Stomach (tissue), 19 donors: ENCODE measurements at regions of chr2 and their contacts with region 1.

Region 1: GRCh38 chr2:30711646-30712085 is 95.6 kb downstream of the CAPN13 start:
- DNase-seq: peak; percentile 88 to 93
- H3K4me3 ChIP-seq: no peak overlapping the region
- H3K27ac ChIP-seq: no peak overlapping the region
- H3K4me1 ChIP-seq: peaks cover 0 to 6% (median 3%) of the 10 kb centered on the region in 4 donors
- H3K27me3 ChIP-seq: no peaks in the 10 kb centered on the region
- CTCF ChIP-seq: peak in 5 of 7 experiments; percentile 92 to 100 (median 98)
- EP300 ChIP-seq: no peak
- POLR2A ChIP-seq: no peak

Region 2: DNA sequence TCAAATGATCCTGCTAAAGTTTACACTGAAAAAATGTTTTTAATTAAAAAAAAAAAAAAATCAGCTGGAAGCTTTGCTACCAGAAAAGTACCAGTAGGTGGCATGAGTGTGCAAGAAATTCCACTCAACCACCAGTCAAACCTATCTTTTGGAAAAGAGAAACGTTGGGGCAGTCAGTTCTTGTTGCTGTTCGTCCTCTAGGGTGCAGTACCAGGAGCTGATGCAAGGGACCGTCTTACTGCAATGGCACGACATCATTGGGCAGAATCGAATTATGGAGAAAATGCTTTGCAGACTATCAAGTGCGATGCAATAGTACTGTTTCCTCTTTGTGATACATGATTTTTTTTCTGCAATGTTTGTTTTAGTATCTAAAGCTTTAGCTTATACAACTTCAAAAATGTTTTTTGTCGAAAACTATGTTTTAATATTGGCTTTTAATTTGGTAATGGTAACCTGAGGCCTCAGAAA is 546.6 kb before region 1 on chr2:
- intact Hi-C with region 1: loop called (anchors 5 kb)
- DNase-seq: peak; percentile 39 to 93
- H3K4me3 ChIP-seq: no peak overlapping the region
- H3K27ac ChIP-seq: no peak overlapping the region
- H3K4me1 ChIP-seq: peaks cover 0 to 41% (median 20%) of the 10 kb centered on the region in 4 donors
- H3K27me3 ChIP-seq: no peaks in the 10 kb centered on the region
- CTCF ChIP-seq: peak in 5 of 7 experiments; percentile 76 to 88 (median 84)
- EP300 ChIP-seq: no peak
- POLR2A ChIP-seq: no peak

Region 3: GRCh38 chr2:30213326-30213725 is 498.3 kb before region 1 on chr2:
- intact Hi-C with region 1: loop called (anchors 5 kb)
- DNase-seq: peak in 1 of 2 donors; percentile 17
- H3K4me3 ChIP-seq: no peak overlapping the region
- H3K27ac ChIP-seq: no peak overlapping the region
- H3K4me1 ChIP-seq: peaks cover 6 to 19% (median 12%) of the 10 kb centered on the region in 4 donors
- H3K27me3 ChIP-seq: no peaks in the 10 kb centered on the region
- CTCF ChIP-seq: no peak
- EP300 ChIP-seq: no peak
- POLR2A ChIP-seq: no peak

Region 4: DNA sequence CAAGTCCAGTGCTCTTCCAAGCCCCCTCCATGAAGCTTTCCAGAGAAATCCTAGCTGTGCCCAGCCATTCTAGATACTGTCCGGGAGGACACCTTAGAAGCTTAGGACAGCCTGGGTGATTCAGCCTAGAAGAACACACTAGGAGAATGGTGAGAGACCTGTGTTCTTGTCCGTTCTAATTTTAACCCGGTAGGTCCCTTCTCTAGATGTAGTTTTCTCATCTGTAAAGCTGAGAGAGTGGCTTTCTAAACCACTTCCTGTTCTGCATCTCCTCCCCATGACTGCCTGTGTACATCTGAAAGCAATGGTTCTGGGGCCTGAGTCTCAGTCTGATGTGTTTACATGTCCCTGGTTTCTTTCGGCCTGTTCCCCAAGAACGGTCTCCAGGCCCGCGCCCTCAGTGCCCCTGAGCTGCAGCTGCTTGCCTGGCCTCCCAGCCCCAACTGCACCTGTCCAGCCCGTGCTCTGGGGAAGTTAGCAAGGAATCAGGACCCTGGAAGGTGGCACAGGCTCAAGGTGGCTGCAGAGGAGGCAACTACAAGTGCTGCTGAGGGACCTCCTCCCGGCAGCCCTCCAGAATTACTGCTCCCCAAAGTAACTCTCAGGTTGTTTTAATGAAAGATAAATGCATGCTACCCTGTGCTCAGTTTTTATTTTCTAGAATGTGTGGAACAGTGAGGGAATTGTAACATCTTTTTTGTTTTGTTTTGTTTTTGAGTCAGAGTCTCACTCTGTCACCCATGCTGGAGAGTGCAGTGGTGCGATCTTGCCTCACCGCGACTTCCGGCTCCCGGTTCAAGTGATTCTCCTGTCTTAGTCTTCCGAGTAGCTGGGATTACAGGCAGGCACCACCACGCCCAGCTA is 374.5 kb before region 1 on chr2:
- intact Hi-C with region 1: loop called (anchors 10 kb)
- DNase-seq: peak in 1 of 2 donors; percentile 56
- H3K4me3 ChIP-seq: no peak overlapping the region
- H3K27ac ChIP-seq: peak overlapping the region in 2 of 5 donors; percentile 49 to 55
- H3K4me1 ChIP-seq: peaks cover 0 to 24% (median 21%) of the 10 kb centered on the region in 4 donors
- H3K27me3 ChIP-seq: no peaks in the 10 kb centered on the region
- CTCF ChIP-seq: no peak
- EP300 ChIP-seq: no peak
- POLR2A ChIP-seq: no peak

Region 5: GRCh38 chr2:31170071-31170698 is 458.5 kb after region 1 on chr2:
- intact Hi-C with region 1: loop called (anchors 5 kb)
- DNase-seq: peak; percentile 53 to 84
- H3K4me3 ChIP-seq: no peak overlapping the region
- H3K27ac ChIP-seq: no peak overlapping the region
- H3K4me1 ChIP-seq: no peaks in the 10 kb centered on the region
- H3K27me3 ChIP-seq: no peaks in the 10 kb centered on the region
- CTCF ChIP-seq: peak in 5 of 7 experiments; percentile 82 to 90 (median 88)
- EP300 ChIP-seq: no peak
- POLR2A ChIP-seq: no peak

Region 6: GRCh38 chr2:31333527-31334183 is 622.0 kb after region 1 on chr2:
- intact Hi-C with region 1: loop called (anchors 10 kb)
- DNase-seq: peak; percentile 88 to 89
- H3K4me3 ChIP-seq: no peak overlapping the region
- H3K27ac ChIP-seq: no peak overlapping the region
- H3K4me1 ChIP-seq: peaks cover 0 to 6% (median 0%) of the 10 kb centered on the region in 4 donors
- H3K27me3 ChIP-seq: peaks cover 0 to 7% (median 0%) of the 10 kb centered on the region in 3 donors
- CTCF ChIP-seq: peak in 5 of 7 experiments; percentile 75 to 92 (median 88)
- EP300 ChIP-seq: no peak
- POLR2A ChIP-seq: no peak